Naive thymus-derived CD4-positive, alpha-beta T cell (primary cell): ENCODE measurements at regions of chrX and their contacts with region 1.

Region 1: DNA sequence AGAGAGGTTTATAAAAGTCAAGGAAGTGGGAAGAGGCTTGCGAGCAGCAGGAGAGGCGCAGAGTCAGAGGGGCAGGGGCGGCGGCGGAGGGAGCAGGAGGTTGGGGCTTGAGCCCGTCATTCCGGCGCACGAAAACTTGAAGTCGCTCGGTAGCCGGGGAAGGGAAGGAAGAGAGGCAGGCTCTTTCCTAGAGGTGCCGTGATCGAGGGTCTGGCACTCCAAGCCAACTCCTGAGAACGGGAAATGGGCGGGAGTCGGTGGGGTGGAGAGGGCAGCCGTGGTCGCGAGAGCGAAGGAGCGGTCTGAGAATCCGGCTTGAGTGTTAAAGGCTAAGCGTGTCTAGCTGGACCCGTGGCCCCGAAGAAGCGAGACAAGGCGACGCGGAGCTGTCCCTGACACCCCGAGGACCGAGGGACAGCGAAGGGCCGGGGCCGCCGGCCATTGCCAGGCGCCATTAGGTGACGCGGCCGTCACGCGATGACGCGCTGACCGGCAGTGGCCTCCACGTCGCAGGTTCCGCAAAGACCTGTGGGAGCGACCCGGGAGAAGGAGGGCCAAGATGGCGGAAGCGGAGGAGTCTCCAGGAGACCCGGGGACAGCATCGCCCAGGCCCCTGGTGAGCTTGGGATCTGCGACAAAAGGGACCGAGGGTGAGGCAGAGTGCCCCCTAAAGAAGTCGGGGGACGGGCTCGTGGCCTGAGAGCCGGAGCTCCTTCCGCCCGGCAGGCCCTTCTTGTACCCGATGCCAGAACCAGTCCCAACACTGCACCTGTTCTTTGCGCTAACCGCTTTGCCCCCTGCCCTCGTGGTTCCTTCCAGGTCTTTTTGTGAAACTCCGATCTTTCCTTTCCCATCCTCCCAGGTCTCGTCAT is at the start of gene YIPF6:
- DNase-seq: peak; percentile 25 to 69 (median 40)
- ATAC-seq: peak; percentile 93
- H3K4me3 ChIP-seq: peak within 1 kb of the TSS; percentile 82
- H3K4me3 Mint-ChIP-seq: peak within 1 kb of the TSS; percentile 90 to 99 (median 95)
- H3K27ac ChIP-seq: peak within 1 kb of the TSS; percentile 92
- H3K27ac Mint-ChIP-seq: peak within 1 kb of the TSS; percentile 94 to 99 (median 98)
- H3K4me1 ChIP-seq: no peaks in the 10 kb centered on the region
- H3K4me1 Mint-ChIP-seq: peaks cover 12 to 51% (median 40%) of the 10 kb centered on the region in 7 donors
- H3K27me3 ChIP-seq: no peaks in the 10 kb centered on the region
- H3K27me3 Mint-ChIP-seq: peaks cover 0 to 6% (median 0%) of the 10 kb centered on the region in 5 donors
- total RNA-seq, gene YIPF6: 8.0 to 17.0 (median 14.2) TPM

Region 2: DNA sequence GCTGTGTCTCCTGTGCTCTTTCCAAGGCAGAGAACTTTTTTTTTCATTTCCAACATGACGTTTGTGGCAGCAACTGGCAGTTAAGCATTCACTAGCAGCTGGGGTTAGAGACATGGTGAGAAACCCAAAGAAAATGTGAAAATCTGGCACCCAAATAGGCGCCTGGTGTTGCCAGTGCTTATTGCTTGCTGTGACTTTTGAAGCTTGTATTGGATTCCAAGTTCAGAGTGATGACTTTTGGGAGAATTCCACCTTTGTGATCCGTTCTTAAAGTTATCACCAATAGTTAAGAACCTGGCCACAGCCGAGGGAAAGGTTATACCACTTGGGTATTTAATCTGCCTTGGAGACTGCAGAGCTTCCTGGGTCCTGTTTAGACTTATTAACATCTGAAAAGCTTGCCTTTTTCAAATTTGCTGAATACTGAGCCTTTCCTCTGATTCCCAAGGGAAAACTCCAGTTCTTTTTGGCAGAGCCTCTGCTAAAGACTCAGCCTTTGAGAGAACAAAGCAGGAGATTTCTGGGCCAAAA is 166.5 kb before region 1 on chrX:
- CTCF ChIA-PET with region 1: no interaction called
- POLR2A ChIA-PET with region 1: no interaction called
- intact Hi-C with region 1: no loop called
- DNase-seq: no peak
- ATAC-seq: no peak
- H3K4me3 ChIP-seq: no peak overlapping the region
- H3K4me3 Mint-ChIP-seq: no peak overlapping the region
- H3K27ac ChIP-seq: no peak overlapping the region
- H3K27ac Mint-ChIP-seq: no peak overlapping the region
- H3K4me1 ChIP-seq: no peaks in the 10 kb centered on the region
- H3K4me1 Mint-ChIP-seq: no peaks in the 10 kb centered on the region
- H3K27me3 ChIP-seq: no peaks in the 10 kb centered on the region
- H3K27me3 Mint-ChIP-seq: no peaks in the 10 kb centered on the region

Region 3: DNA sequence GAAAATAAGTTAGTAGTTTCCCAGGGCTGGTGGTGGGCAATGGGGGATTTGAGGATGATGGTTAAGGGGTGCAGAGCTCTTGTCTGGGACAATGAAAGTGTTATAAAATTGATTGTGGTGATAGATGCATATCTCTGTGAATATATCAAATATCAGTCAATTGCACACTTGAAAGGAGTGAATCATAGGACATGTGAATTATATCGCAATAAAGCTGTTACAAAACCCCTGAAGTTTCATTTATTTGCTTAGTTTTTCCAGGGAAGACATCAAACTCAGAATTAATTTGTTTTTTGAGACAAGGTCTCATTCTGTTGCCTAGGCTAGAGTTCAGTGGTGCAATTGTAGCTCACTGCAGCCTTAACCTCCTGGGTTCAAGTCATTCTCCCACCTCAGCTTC is 17.8 kb before region 1 on chrX:
- CTCF ChIA-PET with region 1: no interaction called
- POLR2A ChIA-PET with region 1: no interaction called
- intact Hi-C with region 1: no loop called
- DNase-seq: no peak
- ATAC-seq: no peak
- H3K4me3 ChIP-seq: no peak overlapping the region
- H3K4me3 Mint-ChIP-seq: no peak overlapping the region
- H3K27ac ChIP-seq: no peak overlapping the region
- H3K27ac Mint-ChIP-seq: no peak overlapping the region
- H3K4me1 ChIP-seq: no peaks in the 10 kb centered on the region
- H3K4me1 Mint-ChIP-seq: no peaks in the 10 kb centered on the region
- H3K27me3 ChIP-seq: no peaks in the 10 kb centered on the region
- H3K27me3 Mint-ChIP-seq: peaks cover 0 to 7% (median 2%) of the 10 kb centered on the region in 5 donors

Region 4: DNA sequence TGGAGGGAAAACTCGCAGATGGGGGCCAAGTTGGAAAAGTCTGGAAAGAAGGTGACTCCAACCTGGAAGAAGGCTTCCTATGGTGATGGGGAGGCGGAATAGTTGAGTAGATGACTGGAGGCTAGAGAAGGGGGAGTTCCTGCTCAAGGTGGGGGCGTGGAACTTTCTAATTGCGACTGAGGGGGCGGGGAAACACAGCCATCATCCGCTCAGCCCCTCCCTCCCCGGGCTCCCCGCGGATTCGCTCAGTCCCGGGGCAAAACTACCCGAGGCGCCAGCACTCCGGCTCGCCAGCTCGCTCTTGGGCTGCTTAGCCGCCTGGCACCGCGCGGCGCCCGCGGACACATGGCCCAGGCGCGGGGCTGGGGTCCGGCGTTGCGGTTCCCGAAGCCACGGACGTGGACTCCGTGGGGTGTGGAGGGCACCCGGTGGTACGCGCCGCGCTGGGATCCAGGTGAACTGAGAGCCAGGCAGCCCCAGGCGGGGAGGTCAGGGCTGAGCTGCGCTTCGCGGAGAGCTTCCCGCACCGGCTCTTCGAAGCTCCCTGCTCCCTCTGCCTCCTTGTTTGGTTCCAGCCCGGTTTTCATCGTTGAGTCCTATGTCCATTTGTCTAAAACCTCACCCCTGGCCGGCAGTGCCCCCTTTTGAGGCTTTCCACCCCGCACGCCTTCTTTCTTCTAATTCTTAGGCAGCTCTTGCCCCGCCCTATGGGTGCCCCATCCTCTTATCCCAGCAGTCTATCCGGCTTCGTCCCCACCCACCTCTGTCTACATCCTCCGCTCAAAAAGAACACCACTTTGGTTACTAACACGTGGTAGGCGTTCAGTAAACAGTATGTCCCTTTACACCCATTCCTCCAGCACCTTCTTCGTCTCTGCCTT is 187.6 kb after region 1 on chrX:
- CTCF ChIA-PET with region 1: no interaction called
- POLR2A ChIA-PET with region 1: no interaction called
- intact Hi-C with region 1: loop called in 1 of 2 experiments (anchors 2 kb)
- DNase-seq: peak in 1 of 9 donors; percentile 30
- ATAC-seq: peak; percentile 79
- H3K4me3 ChIP-seq: no peak overlapping the region
- H3K4me3 Mint-ChIP-seq: peak overlapping the region; percentile 31 to 86 (median 61)
- H3K27ac ChIP-seq: no peak overlapping the region
- H3K27ac Mint-ChIP-seq: peak overlapping the region in 4 of 9 donors; percentile 5 to 65 (median 46)
- H3K4me1 ChIP-seq: no peaks in the 10 kb centered on the region
- H3K4me1 Mint-ChIP-seq: peaks cover 0 to 24% (median 12%) of the 10 kb centered on the region in 7 donors
- H3K27me3 ChIP-seq: no peaks in the 10 kb centered on the region
- H3K27me3 Mint-ChIP-seq: peaks cover 4 to 17% (median 12%) of the 10 kb centered on the region in 5 donors

Region 5: GRCh38 chrX:69165087-69165651 is 666.4 kb after region 1 on chrX and contains the start of gene PJA1:
- CTCF ChIA-PET with region 1: no interaction called
- POLR2A ChIA-PET with region 1: no interaction called
- intact Hi-C with region 1: loop called (anchors 2 to 10 kb)
- DNase-seq: peak; percentile 41 to 74 (median 70)
- ATAC-seq: peak; percentile 86
- H3K4me3 ChIP-seq: peak within 1 kb of the TSS; percentile 68
- H3K4me3 Mint-ChIP-seq: peak within 1 kb of the TSS; percentile 69 to 90 (median 85)
- H3K27ac ChIP-seq: peak within 1 kb of the TSS; percentile 81
- H3K27ac Mint-ChIP-seq: peak within 1 kb of the TSS; percentile 80 to 94 (median 92)
- H3K4me1 ChIP-seq: peaks cover 13 to 15% of the 10 kb centered on the region in 2 donors
- H3K4me1 Mint-ChIP-seq: peaks cover 20 to 37% (median 29%) of the 10 kb centered on the region in 7 donors
- H3K27me3 ChIP-seq: no peaks in the 10 kb centered on the region
- H3K27me3 Mint-ChIP-seq: peaks cover 0 to 12% (median 0%) of the 10 kb centered on the region in 5 donors
- total RNA-seq, gene PJA1: 14.4 to 27.0 (median 22.5) TPM

Region 6: DNA sequence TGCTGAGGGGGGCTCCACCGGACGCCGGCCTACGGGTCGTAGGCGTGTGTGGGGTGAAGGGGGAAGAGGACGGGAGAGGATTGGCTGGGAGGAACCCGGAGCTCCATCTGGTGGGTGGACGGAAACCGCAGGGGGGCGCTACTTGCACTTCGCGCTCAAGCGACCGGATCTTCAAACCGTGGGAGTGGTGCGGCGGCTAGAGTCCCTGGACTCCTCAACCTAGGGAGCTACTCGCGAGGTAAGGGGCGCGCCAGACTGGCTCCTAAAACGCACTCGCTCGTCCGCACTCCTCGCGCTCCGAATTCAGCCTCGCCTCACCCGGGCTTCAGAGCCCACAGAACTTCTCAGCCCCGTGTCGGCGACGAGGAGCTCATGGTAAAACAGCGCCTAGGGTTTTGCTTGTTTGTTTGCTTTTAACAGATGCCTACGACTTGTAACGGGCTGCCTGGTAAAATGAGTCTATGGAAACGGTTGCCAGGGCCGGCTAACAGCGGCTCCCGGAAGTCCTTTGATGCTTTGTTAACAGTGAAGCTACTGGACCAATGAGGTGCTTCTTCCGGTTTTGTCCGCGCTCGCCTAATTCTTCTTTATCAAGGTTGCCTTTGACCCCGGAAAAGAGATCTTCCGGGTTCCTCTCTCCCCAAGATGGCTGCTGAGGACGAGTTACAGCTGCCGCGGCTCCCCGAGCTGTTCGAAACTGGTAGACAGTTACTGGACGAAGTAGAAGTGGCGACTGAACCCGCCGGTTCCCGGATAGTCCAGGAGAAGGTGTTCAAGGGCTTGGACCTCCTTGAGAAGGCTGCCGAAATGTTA is 1634.8 kb after region 1 on chrX and contains the start of gene IGBP1:
- CTCF ChIA-PET with region 1: no interaction called
- POLR2A ChIA-PET with region 1: interaction called, 3 read pairs
- intact Hi-C with region 1: loop called in 1 of 2 experiments (anchors 2 kb)
- DNase-seq: peak; percentile 40 to 90 (median 82)
- ATAC-seq: peak; percentile 90
- H3K4me3 ChIP-seq: peak within 1 kb of the TSS; percentile 94
- H3K4me3 Mint-ChIP-seq: peak within 1 kb of the TSS; percentile 95 to 99 (median 99)
- H3K27ac ChIP-seq: peak within 1 kb of the TSS; percentile 82
- H3K27ac Mint-ChIP-seq: peak within 1 kb of the TSS; percentile 91 to 99 (median 97)
- H3K4me1 ChIP-seq: peaks cover 16 to 18% of the 10 kb centered on the region in 2 donors
- H3K4me1 Mint-ChIP-seq: peaks cover 14 to 47% (median 29%) of the 10 kb centered on the region in 7 donors
- H3K27me3 ChIP-seq: no peaks in the 10 kb centered on the region
- H3K27me3 Mint-ChIP-seq: no peaks in the 10 kb centered on the region
- total RNA-seq, gene IGBP1: 46.7 to 70.1 (median 58.9) TPM